ENCODE measurements at regions of chr19 and their contacts with region 1.

Region 1: GRCh38 chr19:9768175-9769112 is at the start of gene ZNF846:
- DNase-seq: peak; percentile 96
- ATAC-seq: peak; percentile 97
- H3K4me3 Mint-ChIP-seq: peak within 1 kb of the TSS; percentile 85
- H3K27ac Mint-ChIP-seq: peak within 1 kb of the TSS; percentile 99
- H3K4me1 Mint-ChIP-seq: peaks cover 7% of the 10 kb centered on the region
- H3K27me3 Mint-ChIP-seq: no peaks in the 10 kb centered on the region
- CTCF ChIP-seq: no peak
- total RNA-seq, gene ZNF846: 5.1 to 6.1 TPM

Region 2: DNA sequence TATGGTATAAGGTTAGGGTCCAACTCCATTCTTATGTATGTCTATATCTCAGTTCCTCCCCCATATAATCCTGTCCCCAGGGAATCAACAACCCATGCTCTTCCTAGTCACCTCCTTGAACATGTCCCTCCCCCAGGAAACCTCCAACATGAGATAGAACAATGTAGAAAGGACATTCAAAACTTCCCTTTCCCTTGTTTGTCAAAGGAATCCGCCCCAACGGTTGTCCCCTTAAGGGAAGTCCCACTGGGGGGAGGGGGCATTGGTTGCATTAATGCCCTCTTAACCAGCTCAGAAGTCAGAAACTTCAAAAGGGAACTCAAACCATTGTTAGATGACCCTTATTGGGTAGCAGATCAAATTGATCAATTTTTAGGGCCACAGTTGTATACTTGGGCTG is 140.6 kb before region 1 on chr19:
- CTCF ChIA-PET with region 1: interaction called, 10 read pairs
- POLR2A ChIA-PET with region 1: no interaction called
- intact Hi-C with region 1: no loop called
- DNase-seq: no peak
- ATAC-seq: no peak
- H3K4me3 Mint-ChIP-seq: no peak overlapping the region
- H3K27ac Mint-ChIP-seq: no peak overlapping the region
- H3K4me1 Mint-ChIP-seq: peaks cover 6% of the 10 kb centered on the region
- H3K27me3 Mint-ChIP-seq: no peaks in the 10 kb centered on the region
- CTCF ChIP-seq: no peak

Region 3: DNA sequence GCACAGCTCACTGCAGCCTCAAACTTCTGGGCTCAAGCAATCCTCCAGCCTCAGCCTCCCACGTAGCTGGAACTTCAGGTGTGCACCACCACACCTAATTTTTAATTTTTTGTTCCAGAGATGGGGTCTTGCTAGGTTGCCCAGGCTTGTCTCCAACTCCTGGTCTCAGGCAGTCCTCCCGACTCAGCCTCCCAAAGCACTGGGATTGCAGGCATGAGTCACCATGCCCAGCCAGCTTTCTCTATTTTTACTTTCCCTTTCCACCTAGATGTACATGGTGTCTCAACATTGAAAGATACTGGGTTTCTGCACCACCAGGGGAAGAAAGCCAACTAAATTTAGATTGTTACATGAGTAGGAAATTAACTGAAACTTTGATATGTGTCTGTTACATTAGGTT is 13.9 kb after region 1 on chr19:
- CTCF ChIA-PET with region 1: interaction called, 8 read pairs
- POLR2A ChIA-PET with region 1: interaction called, 12 read pairs
- intact Hi-C with region 1: no loop called
- DNase-seq: no peak
- ATAC-seq: no peak
- H3K4me3 Mint-ChIP-seq: no peak overlapping the region
- H3K27ac Mint-ChIP-seq: peak overlapping the region; percentile 42
- H3K4me1 Mint-ChIP-seq: peaks cover 21% of the 10 kb centered on the region
- H3K27me3 Mint-ChIP-seq: no peaks in the 10 kb centered on the region
- CTCF ChIP-seq: no peak